ENCODE measurements at regions of chr11 and their contacts with region 1.

Region 1: GRCh38 chr11:2444821-2445745 is at the start of gene KCNQ1:
- DNase-seq: peak in 4 of 9 experiments; percentile 29 to 68 (median 65)
- ATAC-seq: peak; percentile 41
- H3K4me3 ChIP-seq: peak within 1 kb of the TSS; percentile 53 to 56
- H3K4me3 Mint-ChIP-seq: peak within 1 kb of the TSS; percentile 91
- H3K27ac ChIP-seq: peak within 1 kb of the TSS in 1 of 2 experiments; percentile 35
- H3K27ac Mint-ChIP-seq: peak within 1 kb of the TSS; percentile 88
- H3K4me1 ChIP-seq: peaks cover 51% of the 10 kb centered on the region
- H3K4me1 Mint-ChIP-seq: peaks cover 41% of the 10 kb centered on the region
- H3K27me3 ChIP-seq: peaks cover 0 to 25% of the 10 kb centered on the region in 2 experiments
- H3K27me3 Mint-ChIP-seq: no peaks in the 10 kb centered on the region
- CTCF ChIP-seq: no peak
- total RNA-seq, gene KCNQ1: 24.9 to 25.7 TPM

Region 2: DNA sequence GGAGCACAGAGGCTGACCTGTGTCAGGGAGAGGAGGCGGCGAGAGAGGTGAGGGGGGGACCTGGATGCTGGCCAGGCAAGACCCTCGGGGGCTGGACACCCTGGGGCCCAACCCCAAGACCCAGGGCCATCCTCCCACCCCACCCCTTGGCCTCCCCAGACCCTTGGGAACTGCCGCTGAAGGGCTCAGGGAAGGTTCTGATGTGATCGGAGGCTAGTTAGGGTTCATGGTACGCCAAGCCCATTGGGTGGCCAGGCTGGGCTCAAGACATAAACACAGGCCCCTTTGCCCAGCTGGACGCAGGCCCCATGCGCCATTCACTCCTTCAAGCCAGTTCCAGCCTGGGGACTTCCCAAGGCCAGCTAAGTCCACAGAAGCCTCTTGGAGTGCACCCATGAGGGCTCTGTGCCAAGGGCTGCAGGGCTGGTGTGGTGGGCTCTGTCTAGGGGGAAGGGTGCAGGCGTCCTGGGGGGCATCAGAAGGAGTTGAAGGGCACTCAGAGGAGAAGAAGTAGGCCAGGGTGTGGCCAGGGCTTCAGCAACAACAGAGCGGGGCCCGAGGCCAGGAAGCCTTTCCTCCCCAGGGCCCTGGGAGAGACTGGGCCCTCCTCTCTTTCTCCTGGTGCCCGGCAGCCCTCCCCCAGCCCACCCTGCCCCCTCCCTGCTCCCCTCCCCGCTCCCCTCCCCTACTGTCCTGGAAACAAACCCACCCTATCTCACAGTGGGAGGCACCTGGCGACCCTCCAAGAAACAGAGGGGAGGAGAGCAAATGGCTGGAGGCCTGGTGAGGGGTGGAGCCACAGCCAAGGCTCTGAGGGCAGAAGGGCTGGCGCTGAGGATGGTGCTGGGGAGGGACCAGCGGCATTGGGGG is 130.3 kb before region 1 on chr11:
- CTCF ChIA-PET with region 1: no interaction called
- POLR2A ChIA-PET with region 1: no interaction called
- intact Hi-C with region 1: no loop called
- DNase-seq: peak in 1 of 9 experiments; percentile 7
- ATAC-seq: no peak
- H3K4me3 ChIP-seq: no peak overlapping the region
- H3K4me3 Mint-ChIP-seq: no peak overlapping the region
- H3K27ac ChIP-seq: no peak overlapping the region
- H3K27ac Mint-ChIP-seq: peak overlapping the region; percentile 60
- H3K4me1 ChIP-seq: peaks cover 41% of the 10 kb centered on the region
- H3K4me1 Mint-ChIP-seq: peaks cover 25% of the 10 kb centered on the region
- H3K27me3 ChIP-seq: no peaks in the 10 kb centered on the region
- H3K27me3 Mint-ChIP-seq: no peaks in the 10 kb centered on the region
- CTCF ChIP-seq: no peak

Region 3: GRCh38 chr11:2434008-2434407 is 11.1 kb before region 1 on chr11:
- CTCF ChIA-PET with region 1: no interaction called
- POLR2A ChIA-PET with region 1: no interaction called
- intact Hi-C with region 1: no loop called
- DNase-seq: no peak
- ATAC-seq: no peak
- H3K4me3 ChIP-seq: no peak overlapping the region
- H3K4me3 Mint-ChIP-seq: no peak overlapping the region
- H3K27ac ChIP-seq: no peak overlapping the region
- H3K27ac Mint-ChIP-seq: no peak overlapping the region
- H3K4me1 ChIP-seq: no peaks in the 10 kb centered on the region
- H3K4me1 Mint-ChIP-seq: no peaks in the 10 kb centered on the region
- H3K27me3 ChIP-seq: no peaks in the 10 kb centered on the region
- H3K27me3 Mint-ChIP-seq: no peaks in the 10 kb centered on the region
- CTCF ChIP-seq: no peak

Region 4: GRCh38 chr11:2466869-2467698 is 22.0 kb after region 1 on chr11:
- CTCF ChIA-PET with region 1: interaction called, 13 read pairs
- POLR2A ChIA-PET with region 1: interaction called, 5 read pairs
- intact Hi-C with region 1: loop called (anchors 1 to 2 kb)
- DNase-seq: peak in 8 of 9 experiments; percentile 52 to 87 (median 68)
- ATAC-seq: peak; percentile 97
- H3K4me3 ChIP-seq: peak overlapping the region; percentile 16 to 46
- H3K4me3 Mint-ChIP-seq: peak overlapping the region; percentile 75
- H3K27ac ChIP-seq: no peak overlapping the region
- H3K27ac Mint-ChIP-seq: peak overlapping the region; percentile 8
- H3K4me1 ChIP-seq: peaks cover 64% of the 10 kb centered on the region
- H3K4me1 Mint-ChIP-seq: peaks cover 79% of the 10 kb centered on the region
- H3K27me3 ChIP-seq: peaks cover 0 to 2% of the 10 kb centered on the region in 2 experiments
- H3K27me3 Mint-ChIP-seq: no peaks in the 10 kb centered on the region
- CTCF ChIP-seq: no peak

Measured in CD8-positive, alpha-beta T cell (primary cell).